Mammary epithelial cell (primary cell): ENCODE measurements at regions of chr19 and their contacts with region 1.

Region 1: GRCh38 chr19:4375164-4376027 is 25.0 kb downstream of the SH3GL1 start:
- DNase-seq: peak; percentile 61
- H3K4me3 ChIP-seq: no peak overlapping the region
- H3K27ac ChIP-seq: peak overlapping the region; percentile 60
- H3K4me1 ChIP-seq: peaks cover 83% of the 10 kb centered on the region
- H3K27me3 ChIP-seq: no peaks in the 10 kb centered on the region
- CTCF ChIP-seq: peak in 1 of 2 donors; percentile 20

Region 2: DNA sequence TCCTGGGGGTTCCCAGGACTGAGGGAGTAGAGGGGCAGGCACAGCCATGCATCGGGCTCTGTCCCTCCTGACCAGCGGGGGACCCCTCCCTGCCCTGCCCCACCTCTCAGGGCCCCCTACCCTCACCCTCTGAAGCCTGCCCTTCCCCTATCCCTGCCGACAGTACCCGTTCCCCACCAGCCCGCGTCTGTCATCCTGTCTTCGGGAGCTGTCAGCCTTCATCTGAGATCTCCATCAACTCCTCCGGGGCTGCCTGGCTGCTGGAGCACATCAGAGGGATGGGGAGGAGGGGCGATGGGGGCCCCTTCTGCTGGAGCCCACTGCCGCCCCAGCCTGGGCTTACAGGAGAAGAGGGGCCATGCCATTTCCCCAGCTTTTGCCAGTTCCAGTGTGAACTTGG is 102.5 kb before region 1 on chr19:
- CTCF ChIA-PET with region 1: no interaction called
- dilution Hi-C with region 1: loop called (anchors 5 kb)
- in situ Hi-C with region 1: loop called in 1 of 2 experiments (anchors 25 kb)
- intact Hi-C with region 1: no loop called
- DNase-seq: no peak
- H3K4me3 ChIP-seq: no peak overlapping the region
- H3K27ac ChIP-seq: no peak overlapping the region
- H3K4me1 ChIP-seq: no peaks in the 10 kb centered on the region
- H3K27me3 ChIP-seq: no peaks in the 10 kb centered on the region
- CTCF ChIP-seq: no peak

Region 3: GRCh38 chr19:4390567-4391305 is 15.3 kb after region 1 on chr19:
- CTCF ChIA-PET with region 1: no interaction called
- dilution Hi-C with region 1: no loop called
- in situ Hi-C with region 1: no loop called
- intact Hi-C with region 1: loop called (anchors 1 kb)
- DNase-seq: peak; percentile 73
- H3K4me3 ChIP-seq: no peak overlapping the region
- H3K27ac ChIP-seq: peak overlapping the region; percentile 66
- H3K4me1 ChIP-seq: peaks cover 43% of the 10 kb centered on the region
- H3K27me3 ChIP-seq: no peaks in the 10 kb centered on the region
- CTCF ChIP-seq: no peak

Region 4: DNA sequence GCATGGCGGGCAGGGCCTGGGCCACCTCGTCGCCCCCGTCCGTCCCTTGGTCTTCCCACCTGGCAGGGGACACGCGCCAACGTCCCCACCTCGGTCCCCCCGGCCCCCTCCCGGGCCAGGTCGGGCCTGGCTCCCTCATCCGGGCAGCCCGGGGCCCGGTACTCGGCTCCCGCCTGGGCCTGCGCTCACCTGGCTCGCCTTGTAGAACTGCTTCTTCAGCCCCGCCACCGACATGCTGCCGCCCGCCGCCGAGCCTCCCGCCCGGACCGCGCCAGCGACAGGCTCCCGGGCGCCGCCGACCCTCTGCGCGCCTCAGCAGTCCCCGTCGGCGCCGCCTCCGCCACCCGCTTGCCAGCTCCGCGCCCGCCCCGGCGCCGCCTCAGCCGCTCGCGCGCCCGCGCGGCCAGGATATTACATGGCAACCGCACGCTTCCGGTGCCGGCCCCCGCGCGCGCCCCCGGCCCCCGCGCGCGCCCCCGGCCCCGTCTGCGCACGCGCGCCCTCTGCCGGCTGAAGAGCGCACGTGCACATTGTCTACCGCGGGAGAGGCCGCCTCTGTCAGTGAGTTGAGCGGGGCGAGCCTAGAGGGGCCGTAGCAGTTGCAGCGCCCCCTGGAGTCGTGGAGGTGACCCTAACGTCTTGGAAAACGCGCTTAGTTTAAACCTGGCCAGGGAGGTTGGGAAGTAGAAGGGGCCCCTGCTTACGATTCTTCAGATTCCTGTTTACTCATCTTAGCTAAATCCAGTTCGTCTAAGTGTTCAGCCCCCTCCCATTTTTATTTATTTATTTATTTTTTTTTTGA is 24.9 kb after region 1 on chr19 and contains the start of gene SH3GL1:
- CTCF ChIA-PET with region 1: no interaction called
- dilution Hi-C with region 1: no loop called
- in situ Hi-C with region 1: no loop called
- intact Hi-C with region 1: loop called (anchors 1 kb)
- DNase-seq: peak; percentile 75
- H3K4me3 ChIP-seq: peak within 1 kb of the TSS; percentile 75 to 96 (median 87)
- H3K27ac ChIP-seq: peak within 1 kb of the TSS; percentile 95
- H3K4me1 ChIP-seq: peaks cover 19% of the 10 kb centered on the region
- H3K27me3 ChIP-seq: no peaks in the 10 kb centered on the region
- CTCF ChIP-seq: peak; percentile 91 to 98
- total RNA-seq, gene SH3GL1: 80.5 to 149 TPM

Region 5: GRCh38 chr19:4471403-4472173 is 96.2 kb after region 1 on chr19:
- CTCF ChIA-PET with region 1: no interaction called
- dilution Hi-C with region 1: no loop called
- in situ Hi-C with region 1: no loop called
- intact Hi-C with region 1: loop called (anchors 5 kb)
- DNase-seq: peak; percentile 100
- H3K4me3 ChIP-seq: peak overlapping the region; percentile 52 to 66 (median 54)
- H3K27ac ChIP-seq: peak overlapping the region; percentile 14
- H3K4me1 ChIP-seq: peaks cover 14% of the 10 kb centered on the region
- H3K27me3 ChIP-seq: no peaks in the 10 kb centered on the region
- CTCF ChIP-seq: no peak